Activated CD4-positive, alpha-beta T cell treated with anti-CD3 and anti-CD28 coated beads, Interleukin-2, amount 10 ng/mL, durations not matched to agents 7 days and 5 days (primary cell): ENCODE measurements at regions of chr7 and their contacts with region 1.

Region 1: DNA sequence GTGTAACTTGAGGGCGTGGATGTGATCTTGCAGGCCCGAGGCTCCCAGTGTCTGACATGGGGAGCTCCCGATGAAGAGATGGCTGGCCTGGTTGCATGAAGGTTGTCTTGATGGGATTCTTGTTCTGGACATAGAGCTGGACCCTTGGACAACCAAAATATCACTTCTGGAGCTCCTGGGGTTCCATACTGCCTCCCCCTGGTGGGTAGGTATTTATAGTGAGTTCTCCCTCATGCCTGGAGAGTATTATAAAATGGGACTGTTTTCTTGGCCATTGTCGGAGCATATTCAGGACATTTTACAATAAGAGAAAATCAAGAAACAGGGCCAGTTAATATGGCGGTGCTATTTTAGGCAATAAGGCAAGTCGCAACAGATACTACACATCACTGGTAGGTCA is 32.6 kb upstream of the GIMAP8 start:
- DNase-seq: no peak
- H3K4me3 Mint-ChIP-seq: no peak overlapping the region
- H3K27ac Mint-ChIP-seq: no peak overlapping the region
- H3K4me1 Mint-ChIP-seq: peaks cover 11% of the 10 kb centered on the region
- H3K27me3 Mint-ChIP-seq: no peaks in the 10 kb centered on the region

Region 2: DNA sequence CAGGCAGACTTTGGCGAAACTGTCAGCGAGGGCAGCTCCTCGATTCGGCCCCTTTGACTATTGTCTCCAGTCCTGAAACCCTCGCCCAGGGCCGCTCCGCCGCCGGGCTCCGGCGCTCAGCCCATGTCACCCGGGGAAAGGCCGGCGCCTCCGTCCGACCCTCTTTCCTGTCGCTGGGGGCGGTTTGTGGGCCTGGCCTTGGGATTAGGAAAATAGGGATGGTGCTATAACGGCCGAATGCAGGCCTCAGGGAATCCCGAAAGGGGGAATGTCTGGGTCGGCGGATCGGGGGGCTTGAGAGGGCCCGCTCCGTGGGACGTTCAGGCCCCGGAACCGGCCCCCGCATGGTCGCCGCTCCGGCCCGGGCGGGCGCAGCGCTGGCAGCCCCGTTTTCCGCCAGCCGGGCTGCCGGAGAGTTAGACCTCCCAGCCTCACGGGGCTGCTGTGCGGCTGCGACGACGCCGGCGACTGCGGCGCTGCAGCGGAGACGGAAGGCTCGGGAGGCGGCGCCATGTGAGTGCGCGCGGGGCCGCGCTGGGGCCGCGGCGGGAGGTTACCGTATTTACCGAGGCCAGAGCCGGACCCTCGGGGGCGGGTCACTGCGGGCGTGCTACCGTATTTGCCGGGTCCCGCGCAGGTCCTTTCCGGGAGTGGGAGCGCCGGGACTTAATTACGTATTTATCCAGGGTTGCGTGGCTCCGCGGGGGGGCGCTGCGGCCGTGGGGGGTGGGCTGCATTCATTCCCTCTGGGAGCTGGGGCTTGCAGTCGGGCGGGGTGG is 12.9 kb before region 1 on chr7:
- CTCF ChIA-PET with region 1: interaction called, 16 read pairs
- POLR2A ChIA-PET with region 1: no interaction called
- DNase-seq: peak; percentile 79
- H3K4me3 Mint-ChIP-seq: peak overlapping the region; percentile 94
- H3K27ac Mint-ChIP-seq: peak overlapping the region; percentile 95
- H3K4me1 Mint-ChIP-seq: peaks cover 38% of the 10 kb centered on the region
- H3K27me3 Mint-ChIP-seq: no peaks in the 10 kb centered on the region

Region 3: GRCh38 chr7:150502519-150502918 is 84.7 kb after region 1 on chr7:
- CTCF ChIA-PET with region 1: no interaction called
- POLR2A ChIA-PET with region 1: no interaction called
- DNase-seq: peak; percentile 73
- H3K4me3 Mint-ChIP-seq: peak overlapping the region; percentile 58
- H3K27ac Mint-ChIP-seq: peak overlapping the region; percentile 92
- H3K4me1 Mint-ChIP-seq: peaks cover 82% of the 10 kb centered on the region
- H3K27me3 Mint-ChIP-seq: no peaks in the 10 kb centered on the region